Activated naive CD8-positive, alpha-beta T cell treated with anti-CD3 and anti-CD28 coated beads, Interleukin-2, amount 10 ng/mL, durations not matched to agents 7 days and 5 days (primary cell): ENCODE measurements at regions of chr15 and their contacts with region 1.

Region 1: DNA sequence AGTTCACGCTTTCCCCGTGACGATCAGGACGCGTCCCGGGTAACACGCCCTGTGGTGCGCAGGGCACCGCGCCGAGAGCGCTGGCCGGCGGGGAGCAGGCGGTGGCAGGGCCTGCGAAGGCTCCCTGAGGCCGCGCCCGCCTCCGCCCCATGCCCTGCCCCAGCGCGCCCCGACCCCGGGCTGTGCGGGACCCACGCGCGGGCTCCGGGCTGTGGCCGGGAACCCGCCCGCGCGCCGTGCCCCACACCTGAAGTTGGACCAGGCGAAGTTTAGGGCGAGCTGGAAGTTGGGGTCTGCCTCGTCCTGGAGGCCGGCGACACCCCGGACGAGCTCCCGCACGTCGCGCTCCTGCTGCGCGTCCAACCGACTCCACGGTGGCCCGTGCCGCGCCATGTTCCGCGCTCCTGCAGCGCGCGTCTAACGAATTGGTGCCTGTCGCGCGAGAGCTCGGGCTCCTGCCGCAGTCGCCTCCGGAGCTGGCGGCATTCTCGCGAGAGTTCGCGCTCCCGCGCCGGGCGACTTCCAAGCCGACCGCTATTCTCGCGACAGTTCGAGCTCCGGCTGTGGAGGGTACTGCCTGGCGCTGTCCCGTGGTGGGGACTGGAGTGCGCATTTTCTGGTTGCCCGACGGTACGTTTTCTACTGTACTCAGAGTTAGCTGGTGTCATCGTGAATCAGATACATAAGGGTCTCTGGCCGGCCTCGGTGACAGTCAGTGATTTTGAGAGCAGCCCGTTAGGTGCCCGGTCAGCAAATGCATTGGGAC is at the start of gene TUBGCP5:
- DNase-seq: peak; percentile 98
- ATAC-seq: peak; percentile 94
- H3K4me3 Mint-ChIP-seq: peak within 1 kb of the TSS; percentile 100
- H3K27ac Mint-ChIP-seq: peak within 1 kb of the TSS; percentile 96
- H3K4me1 Mint-ChIP-seq: peaks cover 17% of the 10 kb centered on the region
- H3K27me3 Mint-ChIP-seq: no peaks in the 10 kb centered on the region
- total RNA-seq, gene TUBGCP5: 20.4 to 20.8 TPM

Region 2: DNA sequence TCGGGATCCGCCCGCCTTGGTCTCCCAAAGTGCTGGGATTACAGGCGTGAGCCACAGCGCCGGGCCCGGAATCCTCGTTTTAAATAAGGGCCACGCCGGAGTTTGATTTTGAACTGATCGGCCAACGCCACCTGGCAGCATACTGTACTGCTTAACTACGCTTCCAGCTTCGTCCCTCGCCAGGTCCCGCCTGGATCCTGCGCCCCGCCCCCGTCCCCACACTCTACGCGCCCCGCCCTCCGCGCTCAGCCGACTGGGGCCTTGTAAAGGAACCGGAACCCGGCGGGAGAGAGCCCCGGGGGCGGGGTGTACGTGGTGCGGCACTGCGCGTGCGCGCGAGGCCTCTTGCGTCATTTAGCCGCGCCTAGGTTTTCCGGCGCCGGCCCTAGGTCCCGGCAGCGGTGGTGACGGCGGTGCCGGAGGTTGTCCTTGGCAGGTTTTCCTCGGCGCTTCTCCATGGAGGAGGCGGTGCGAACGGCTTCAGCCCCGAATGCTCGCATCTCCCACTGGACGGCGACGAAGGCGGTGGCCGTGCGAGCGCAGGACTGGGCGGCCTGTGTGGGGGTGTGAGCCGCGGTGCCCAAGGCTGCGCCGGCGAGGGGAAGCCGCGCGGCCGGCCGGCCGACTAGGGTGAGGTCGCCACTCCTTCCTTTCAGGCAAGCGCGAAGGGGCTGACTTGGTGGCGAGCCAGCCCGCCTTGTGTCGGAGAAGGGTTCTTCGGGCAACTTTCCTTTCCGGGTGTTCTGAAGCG is 200.9 kb before region 1 on chr15 and contains the start of gene NIPA2:
- POLR2A ChIA-PET with region 1: interaction called, 11 read pairs
- DNase-seq: peak; percentile 99
- ATAC-seq: peak; percentile 92
- H3K4me3 Mint-ChIP-seq: peak within 1 kb of the TSS; percentile 98
- H3K27ac Mint-ChIP-seq: peak within 1 kb of the TSS; percentile 92
- H3K4me1 Mint-ChIP-seq: peaks cover 18% of the 10 kb centered on the region
- H3K27me3 Mint-ChIP-seq: peaks cover 5% of the 10 kb centered on the region
- total RNA-seq, gene NIPA2: 42.2 to 47.9 TPM

Region 3: GRCh38 chr15:23003736-23004135 is 35.6 kb before region 1 on chr15:
- POLR2A ChIA-PET with region 1: no interaction called
- DNase-seq: no peak
- ATAC-seq: no peak
- H3K4me3 Mint-ChIP-seq: no peak overlapping the region
- H3K27ac Mint-ChIP-seq: no peak overlapping the region
- H3K4me1 Mint-ChIP-seq: no peaks in the 10 kb centered on the region
- H3K27me3 Mint-ChIP-seq: no peaks in the 10 kb centered on the region

Region 4: GRCh38 chr15:23026218-23026617 is 13.1 kb before region 1 on chr15:
- POLR2A ChIA-PET with region 1: interaction called, 10 read pairs
- DNase-seq: no peak
- ATAC-seq: no peak
- H3K4me3 Mint-ChIP-seq: no peak overlapping the region
- H3K27ac Mint-ChIP-seq: no peak overlapping the region
- H3K4me1 Mint-ChIP-seq: no peaks in the 10 kb centered on the region
- H3K27me3 Mint-ChIP-seq: no peaks in the 10 kb centered on the region